Pancreas (tissue), 10 donors: ENCODE measurements at regions of chr1 and their contacts with region 1.

Region 1: GRCh38 chr1:1890506-1891348 is at the start of gene GNB1:
- DNase-seq: peak; percentile 85 to 95 (median 90)
- ATAC-seq: peak; percentile 82 to 92 (median 88)
- H3K4me3 ChIP-seq: peak within 1 kb of the TSS; percentile 60 to 93 (median 70)
- H3K27ac ChIP-seq: peak within 1 kb of the TSS; percentile 68 to 88 (median 82)
- H3K4me1 ChIP-seq: peaks cover 20 to 28% (median 26%) of the 10 kb centered on the region in 3 donors
- H3K27me3 ChIP-seq: no peaks in the 10 kb centered on the region
- CTCF ChIP-seq: no peak
- total RNA-seq, gene GNB1: 75.4 to 160 (median 97.5) TPM

Region 2: DNA sequence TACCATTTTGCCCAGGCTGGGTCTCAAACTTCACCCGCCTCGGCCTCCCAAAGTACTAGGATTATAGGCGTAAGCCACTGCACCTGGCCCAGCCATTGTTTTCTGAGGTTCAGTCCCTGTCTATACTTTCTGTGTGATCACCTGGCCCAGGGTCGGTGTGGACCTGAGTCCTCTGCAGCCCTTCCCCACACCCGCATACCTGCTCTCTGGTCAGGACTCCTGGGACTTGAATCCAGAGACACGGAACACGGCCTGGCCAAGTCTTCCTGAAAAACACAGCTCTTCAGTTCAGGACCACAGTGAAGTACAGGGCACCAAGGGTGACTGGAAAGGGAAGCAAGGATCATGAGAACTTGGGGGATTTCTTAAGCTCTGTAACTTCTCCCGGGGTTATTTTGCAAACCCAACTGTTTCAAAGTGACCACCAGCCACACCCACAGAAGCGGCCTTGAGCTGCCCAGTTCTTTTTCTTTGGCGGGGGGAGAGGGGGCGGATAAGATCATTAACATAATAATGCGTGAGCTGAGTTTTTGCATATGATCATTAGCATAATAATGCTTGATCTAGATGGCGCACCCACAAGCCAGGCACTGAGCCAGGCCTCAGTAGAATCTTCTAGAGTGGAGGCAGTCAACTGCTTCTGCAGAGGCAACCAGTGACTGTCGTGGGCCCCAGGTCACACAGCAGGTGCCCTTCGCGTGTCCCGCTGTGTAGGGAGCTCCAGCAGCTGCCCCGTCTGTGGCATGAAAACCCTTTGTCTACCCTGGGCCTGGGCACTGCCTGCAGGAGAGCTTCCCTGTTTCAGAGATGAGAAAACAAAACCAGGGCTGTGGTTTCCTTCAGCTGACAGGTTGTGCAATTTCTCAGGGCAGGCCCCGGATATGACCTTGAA is 110.8 kb before region 1 on chr1:
- intact Hi-C with region 1: loop called in 2 of 3 experiments (anchors 10 kb)
- DNase-seq: peak in 2 of 6 donors; percentile 30 to 64
- ATAC-seq: peak in 2 of 4 donors; percentile 6 to 13
- H3K4me3 ChIP-seq: peak overlapping the region in 1 of 4 donors; percentile 86
- H3K27ac ChIP-seq: peak overlapping the region in 3 of 4 donors; percentile 13 to 89 (median 89)
- H3K4me1 ChIP-seq: peaks cover 31 to 59% (median 31%) of the 10 kb centered on the region in 3 donors
- H3K27me3 ChIP-seq: no peaks in the 10 kb centered on the region
- CTCF ChIP-seq: no peak